ENCODE measurements at regions of chr1 and their contacts with region 1.

Region 1: GRCh38 chr1:174769961-174770549 is 229.7 kb upstream of the CACYBP start:
- DNase-seq: no peak
- H3K4me3 Mint-ChIP-seq: no peak overlapping the region
- H3K27ac Mint-ChIP-seq: no peak overlapping the region
- H3K4me1 Mint-ChIP-seq: peaks cover 30% of the 10 kb centered on the region
- H3K27me3 Mint-ChIP-seq: no peaks in the 10 kb centered on the region
- CTCF ChIP-seq: peak; percentile 43

Region 2: DNA sequence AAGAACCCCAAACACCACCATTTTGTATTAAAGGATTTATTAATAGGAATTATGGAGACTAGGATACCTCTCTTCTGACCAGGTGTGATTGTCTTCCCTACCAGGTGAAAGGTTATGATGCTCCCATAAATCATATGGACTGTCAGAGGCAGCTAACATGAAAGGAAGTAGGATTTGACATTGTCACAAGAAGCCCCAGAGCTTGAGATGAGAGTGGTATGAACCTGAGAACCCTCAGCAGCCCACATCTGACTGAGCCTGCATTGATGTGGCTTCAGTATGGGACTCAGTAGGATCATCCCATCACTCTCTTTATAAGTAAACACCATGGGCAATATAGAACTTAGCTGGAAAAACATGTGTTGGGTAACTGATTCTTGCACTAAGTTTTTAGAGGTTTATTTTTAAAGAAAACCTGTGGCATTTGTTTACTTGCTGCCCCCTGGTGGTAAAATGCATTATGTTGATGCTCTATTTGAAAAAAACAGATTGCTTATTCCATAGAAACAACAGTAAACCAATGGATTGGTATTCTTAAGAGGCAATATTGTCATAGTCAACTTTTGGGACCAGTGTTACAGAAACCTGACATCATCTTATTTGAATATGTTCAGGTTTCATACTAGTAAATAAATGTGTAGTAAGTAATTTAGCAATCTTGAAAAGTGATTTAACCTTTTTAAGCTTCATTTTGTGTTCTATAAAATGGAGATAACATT is 213.1 kb after region 1 on chr1:
- CTCF ChIA-PET with region 1: no interaction called
- intact Hi-C with region 1: loop called (anchors 1 kb)
- DNase-seq: peak; percentile 62
- H3K4me3 Mint-ChIP-seq: no peak overlapping the region
- H3K27ac Mint-ChIP-seq: no peak overlapping the region
- H3K4me1 Mint-ChIP-seq: no peaks in the 10 kb centered on the region
- H3K27me3 Mint-ChIP-seq: no peaks in the 10 kb centered on the region
- CTCF ChIP-seq: peak; percentile 54

Region 3: DNA sequence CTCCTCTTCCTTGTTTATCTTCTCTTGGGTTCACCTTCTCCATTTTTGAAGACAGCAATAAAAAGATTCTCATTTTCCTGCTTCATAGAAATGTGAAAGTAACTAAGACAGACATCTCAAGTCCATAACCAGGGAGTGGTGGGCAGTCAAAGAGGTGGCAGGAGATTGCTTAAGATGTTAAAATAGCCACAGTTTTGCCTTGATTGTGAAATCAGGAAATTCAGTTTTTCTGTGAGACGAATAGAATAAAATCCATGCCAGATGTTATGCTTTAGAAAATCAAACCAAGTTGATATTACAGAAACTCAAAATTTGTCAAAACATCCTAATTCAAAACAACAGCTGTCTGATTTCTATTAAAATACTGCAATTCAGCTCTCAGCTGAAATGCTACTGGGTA is 354.8 kb after region 1 on chr1:
- CTCF ChIA-PET with region 1: no interaction called
- intact Hi-C with region 1: loop called (anchors 2 kb)
- DNase-seq: no peak
- H3K4me3 Mint-ChIP-seq: no peak overlapping the region
- H3K27ac Mint-ChIP-seq: no peak overlapping the region
- H3K4me1 Mint-ChIP-seq: no peaks in the 10 kb centered on the region
- H3K27me3 Mint-ChIP-seq: peaks cover 42% of the 10 kb centered on the region
- CTCF ChIP-seq: no peak